ENCODE measurements at regions of chr12 and their contacts with region 1.

Region 1: DNA sequence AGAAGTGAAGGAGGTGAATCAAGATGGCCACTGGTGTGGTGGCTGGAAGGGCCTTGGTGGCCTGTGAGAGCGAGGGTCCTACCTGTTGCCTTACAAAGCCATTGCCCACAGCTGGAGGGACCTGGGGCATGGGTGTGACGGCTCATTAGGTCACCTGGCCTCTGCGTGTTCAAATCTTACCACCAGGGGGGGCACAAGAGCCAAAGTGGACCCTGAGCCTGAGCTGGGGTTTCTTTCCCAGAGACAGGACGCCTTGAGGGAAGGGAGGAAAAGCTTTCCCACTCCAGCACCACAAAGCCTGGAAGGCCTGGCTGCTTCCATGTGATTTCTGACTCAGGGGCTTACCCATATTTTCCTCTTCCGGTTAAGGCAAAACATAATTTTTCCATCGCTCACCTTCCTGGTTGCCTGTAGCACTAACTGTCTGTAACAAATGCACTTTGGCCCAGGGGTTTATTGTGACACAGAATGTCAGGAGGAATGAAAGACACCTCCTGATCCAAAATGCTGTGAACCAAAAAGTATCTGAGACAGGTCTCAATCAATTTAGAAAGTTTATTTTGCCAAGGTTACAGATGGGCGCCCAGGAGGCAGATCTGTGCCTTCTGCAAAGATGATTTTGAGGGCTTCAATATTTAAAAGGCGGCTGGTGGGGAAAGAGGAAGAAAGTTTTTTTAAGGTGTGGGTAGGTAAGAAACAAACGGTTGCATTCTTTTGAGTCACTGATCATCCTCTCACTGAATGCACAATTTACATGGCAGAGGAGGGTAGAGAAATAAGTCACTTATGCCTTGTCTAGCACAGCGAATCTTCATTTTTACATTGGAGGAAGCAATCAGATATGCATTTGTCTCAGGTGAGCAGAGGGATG is 4.3 kb upstream of the CD9 start:
- DNase-seq: peak; percentile 76 to 89 (median 84)
- ATAC-seq: peak; percentile 87 to 94 (median 90)
- H3K4me3 ChIP-seq: no peak overlapping the region
- H3K27ac ChIP-seq: peak overlapping the region; percentile 64 to 68 (median 67)
- H3K4me1 ChIP-seq: peaks cover 0 to 10% (median 3%) of the 10 kb centered on the region in 4 donors
- H3K27me3 ChIP-seq: no peaks in the 10 kb centered on the region
- CTCF ChIP-seq: peak; percentile 84 to 96 (median 92)
- POLR2A ChIP-seq: no peak

Region 2: DNA sequence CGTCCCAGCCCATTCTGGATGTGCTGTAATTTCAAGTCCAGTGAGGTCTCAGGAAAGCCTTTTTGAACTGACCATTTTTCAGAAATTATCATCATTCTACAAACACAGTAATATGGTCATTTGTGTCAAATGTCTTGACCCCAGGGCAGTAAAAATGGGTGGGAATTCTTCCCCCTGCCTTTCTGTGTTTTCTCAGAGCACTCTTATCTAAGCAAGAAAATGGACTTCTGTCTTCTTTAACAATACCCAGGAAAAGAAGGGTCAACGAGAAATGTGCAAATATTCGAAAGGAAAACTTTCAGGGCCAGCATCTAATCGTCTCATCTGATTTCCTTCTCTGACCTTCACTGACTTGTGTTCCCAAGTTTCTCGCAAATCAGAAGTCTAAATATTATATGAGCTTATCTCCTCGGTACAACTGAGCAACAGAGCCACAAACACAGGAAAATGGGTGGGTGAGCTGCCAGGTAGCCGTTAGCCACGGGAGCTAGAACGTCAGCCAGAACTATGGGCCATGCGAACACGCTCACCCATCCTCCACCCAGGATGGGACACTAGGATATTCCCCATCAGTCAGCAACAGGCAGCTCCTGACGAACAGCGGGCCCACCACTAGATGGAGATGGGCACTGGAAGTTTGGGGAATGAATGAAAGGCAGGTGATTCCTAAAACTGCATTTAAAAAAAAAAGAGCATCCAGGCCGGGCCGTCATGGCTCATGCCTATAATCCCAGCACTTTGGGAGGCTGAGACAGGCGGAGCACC is 128.6 kb before region 1 on chr12:
- intact Hi-C with region 1: loop called in 1 of 2 experiments (anchors 5 kb)
- DNase-seq: peak; percentile 74 to 80 (median 79)
- ATAC-seq: peak; percentile 56 to 71 (median 61)
- H3K4me3 ChIP-seq: no peak overlapping the region
- H3K27ac ChIP-seq: peak overlapping the region in 2 of 3 donors; percentile 21 to 24
- H3K4me1 ChIP-seq: peaks cover 0 to 30% (median 5%) of the 10 kb centered on the region in 4 donors
- H3K27me3 ChIP-seq: no peaks in the 10 kb centered on the region
- CTCF ChIP-seq: peak; percentile 53 to 63 (median 60)
- POLR2A ChIP-seq: no peak

Region 3: DNA sequence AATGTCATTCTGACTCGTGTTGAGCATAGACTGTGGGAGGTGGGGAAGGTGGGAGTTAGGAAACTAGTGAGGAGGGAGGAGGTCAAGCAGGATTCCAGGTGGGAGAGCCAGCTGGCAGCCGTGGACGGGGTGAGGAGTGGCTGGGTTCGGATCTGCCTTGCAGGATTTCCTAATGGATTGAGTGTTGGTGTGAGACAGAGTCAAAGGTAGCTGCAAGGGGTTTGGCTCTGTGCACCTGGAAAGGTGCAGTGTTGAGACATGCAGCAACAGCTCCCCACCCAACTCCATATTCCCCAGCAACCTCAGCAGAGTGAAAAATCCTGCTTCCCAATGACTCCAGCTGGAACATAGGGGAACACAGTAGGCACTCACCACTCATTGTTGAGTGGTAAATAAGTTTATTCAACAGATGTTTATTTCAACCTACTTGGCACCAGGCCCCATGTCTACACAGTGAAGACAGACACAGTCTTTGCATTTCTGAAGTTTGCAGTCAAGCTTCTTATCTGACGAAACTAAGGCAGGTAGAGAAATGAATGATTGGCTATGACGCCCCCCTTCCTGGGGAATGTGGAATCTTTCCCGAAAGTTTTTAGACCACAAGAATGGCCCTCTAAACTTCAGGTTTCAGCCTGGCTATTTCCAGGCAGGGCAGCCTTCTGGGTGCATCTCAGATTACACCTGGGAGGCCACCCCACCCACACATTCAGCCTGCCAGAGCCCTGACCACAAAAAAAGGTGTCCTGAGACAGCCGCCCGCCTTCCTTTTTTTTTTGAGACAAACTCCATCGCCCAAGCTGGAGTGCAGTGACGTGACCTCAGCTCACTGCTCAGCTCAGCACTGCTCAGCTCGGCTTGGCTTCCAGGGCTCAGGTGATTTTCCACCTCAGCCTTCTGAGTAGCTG is 76.7 kb after region 1 on chr12:
- intact Hi-C with region 1: loop called (anchors 5 to 10 kb)
- DNase-seq: peak in 1 of 3 donors; percentile 14
- ATAC-seq: no peak
- H3K4me3 ChIP-seq: no peak overlapping the region
- H3K27ac ChIP-seq: no peak overlapping the region
- H3K4me1 ChIP-seq: peaks cover 0 to 7% (median 0%) of the 10 kb centered on the region in 4 donors
- H3K27me3 ChIP-seq: no peaks in the 10 kb centered on the region
- CTCF ChIP-seq: no peak
- POLR2A ChIP-seq: no peak

Region 4: GRCh38 chr12:6278439-6279255 is 82.7 kb after region 1 on chr12:
- intact Hi-C with region 1: loop called (anchors 5 to 10 kb)
- DNase-seq: peak; percentile 90 to 91 (median 90)
- ATAC-seq: peak; percentile 84 to 95 (median 91)
- H3K4me3 ChIP-seq: peak overlapping the region; percentile 39 to 57 (median 56)
- H3K27ac ChIP-seq: peak overlapping the region; percentile 87 to 95 (median 87)
- H3K4me1 ChIP-seq: peaks cover 0 to 28% (median 8%) of the 10 kb centered on the region in 4 donors
- H3K27me3 ChIP-seq: no peaks in the 10 kb centered on the region
- CTCF ChIP-seq: peak; percentile 84 to 99 (median 94)
- POLR2A ChIP-seq: peak; percentile 84